ENCODE measurements at regions of chr10 and their contacts with region 1.

Region 1: GRCh38 chr10:102352066-102352715 is 43.3 kb upstream of the NFKB2 start:
- DNase-seq: peak; percentile 85
- ATAC-seq: peak; percentile 88
- H3K4me3 Mint-ChIP-seq: no peak overlapping the region
- H3K27ac Mint-ChIP-seq: no peak overlapping the region
- H3K4me1 Mint-ChIP-seq: no peaks in the 10 kb centered on the region
- H3K27me3 Mint-ChIP-seq: no peaks in the 10 kb centered on the region

Region 2: GRCh38 chr10:101207026-101207425 is 1145.2 kb before region 1 on chr10:
- CTCF ChIA-PET with region 1: no interaction called
- POLR2A ChIA-PET with region 1: no interaction called
- intact Hi-C with region 1: no loop called
- DNase-seq: no peak
- ATAC-seq: no peak
- H3K4me3 Mint-ChIP-seq: no peak overlapping the region
- H3K27ac Mint-ChIP-seq: no peak overlapping the region
- H3K4me1 Mint-ChIP-seq: no peaks in the 10 kb centered on the region
- H3K27me3 Mint-ChIP-seq: peaks cover 30% of the 10 kb centered on the region

Region 3: DNA sequence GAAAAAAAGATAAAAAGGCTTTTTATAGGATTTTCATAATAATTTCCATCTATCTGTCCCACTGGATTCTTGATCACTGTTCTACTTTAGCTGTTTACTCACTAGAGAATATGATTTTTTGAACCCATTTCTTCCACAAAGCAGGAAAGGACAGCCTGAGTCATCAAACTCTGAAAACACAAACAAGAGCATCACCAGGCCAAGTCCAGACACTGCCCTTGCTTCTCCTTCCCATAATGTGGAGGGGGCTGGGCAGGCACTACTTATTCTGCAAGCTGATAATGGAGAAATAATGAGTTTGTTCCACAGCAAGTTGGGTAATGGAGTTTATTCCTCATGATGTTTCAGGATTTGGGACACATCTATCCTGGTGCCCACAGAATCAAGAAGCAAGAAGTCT is 495.6 kb before region 1 on chr10:
- CTCF ChIA-PET with region 1: no interaction called
- POLR2A ChIA-PET with region 1: no interaction called
- intact Hi-C with region 1: no loop called
- DNase-seq: no peak
- ATAC-seq: no peak
- H3K4me3 Mint-ChIP-seq: no peak overlapping the region
- H3K27ac Mint-ChIP-seq: no peak overlapping the region
- H3K4me1 Mint-ChIP-seq: peaks cover 4% of the 10 kb centered on the region
- H3K27me3 Mint-ChIP-seq: no peaks in the 10 kb centered on the region

Region 4: DNA sequence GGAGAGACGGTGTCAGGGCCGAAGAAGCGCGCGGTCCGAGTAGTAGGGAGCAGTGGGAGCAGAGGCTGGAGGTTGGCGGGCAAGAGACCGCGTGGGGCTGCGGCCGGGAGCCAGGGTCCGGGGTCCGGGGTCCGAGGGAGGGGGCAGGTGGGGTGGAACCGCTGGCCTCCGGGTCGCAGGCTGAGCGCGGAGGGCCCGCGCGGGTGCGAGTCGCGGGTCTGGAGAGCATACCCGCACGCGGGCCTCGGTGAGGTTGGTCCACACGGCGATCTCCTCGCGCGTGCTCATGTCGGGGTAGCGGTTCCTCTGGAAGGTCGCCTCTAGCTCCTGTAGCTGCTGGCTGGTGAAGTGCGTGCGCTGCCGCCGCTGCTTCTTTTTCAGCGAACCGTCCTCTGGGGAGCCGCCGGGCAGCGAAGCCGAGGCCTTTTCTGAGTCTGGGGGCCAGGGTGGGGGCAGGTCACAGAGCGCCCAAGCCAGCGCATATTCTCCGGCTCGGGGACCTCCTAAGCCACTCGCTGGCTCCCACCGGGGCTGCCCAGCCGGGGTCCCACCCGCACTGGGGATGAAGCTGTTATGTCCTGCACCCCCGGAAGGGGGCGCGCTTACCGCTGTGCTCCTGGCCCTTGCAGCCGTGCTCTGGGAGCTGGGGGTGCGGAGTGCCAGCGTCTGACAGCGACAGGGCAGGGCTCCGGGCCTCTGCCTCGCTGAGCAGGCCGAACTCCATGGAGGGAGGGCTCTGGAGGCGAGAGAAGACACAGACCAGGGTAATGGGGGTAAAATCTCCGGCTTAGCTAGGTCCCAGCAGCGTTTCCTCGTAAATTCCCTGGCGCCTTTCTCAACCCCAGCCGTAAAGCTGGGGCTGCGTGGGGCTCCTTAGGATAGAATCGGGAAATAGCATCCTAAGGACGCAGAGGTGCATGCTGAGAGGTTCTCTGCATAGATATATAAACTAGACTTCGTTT is 120.6 kb before region 1 on chr10:
- CTCF ChIA-PET with region 1: interaction called, 833 read pairs
- POLR2A ChIA-PET with region 1: interaction called, 23 read pairs
- intact Hi-C with region 1: loop called (anchors 1 kb)
- DNase-seq: peak; percentile 89
- ATAC-seq: peak; percentile 78
- H3K4me3 Mint-ChIP-seq: peak overlapping the region; percentile 63
- H3K27ac Mint-ChIP-seq: no peak overlapping the region
- H3K4me1 Mint-ChIP-seq: peaks cover 17% of the 10 kb centered on the region
- H3K27me3 Mint-ChIP-seq: peaks cover 43% of the 10 kb centered on the region

Region 5: DNA sequence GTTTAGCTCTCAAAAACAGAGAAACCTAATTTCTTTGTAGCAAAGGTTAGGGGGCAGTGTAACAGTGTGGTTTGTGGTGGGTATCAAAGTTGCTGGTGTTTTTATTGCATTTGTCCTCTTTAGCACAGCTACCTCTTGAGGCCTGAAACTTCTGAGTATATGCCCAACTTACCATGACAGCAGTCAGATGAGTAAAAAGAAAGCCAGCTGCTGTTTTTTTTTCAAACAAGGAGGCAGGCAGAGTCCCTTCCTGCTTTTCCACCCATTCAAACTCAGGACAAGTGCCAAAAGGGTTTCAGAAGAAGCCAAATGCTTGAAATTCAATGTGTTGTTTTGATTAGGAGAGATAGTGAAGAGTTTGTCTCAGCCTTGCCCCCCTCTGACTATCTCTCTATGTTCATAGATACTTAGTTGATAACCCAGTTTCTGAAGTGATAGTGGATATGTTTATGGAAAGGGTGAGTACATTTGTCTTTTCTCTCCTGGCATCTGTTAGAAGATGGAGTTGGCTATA is 83.8 kb before region 1 on chr10:
- CTCF ChIA-PET with region 1: interaction called, 20 read pairs
- POLR2A ChIA-PET with region 1: interaction called, 4 read pairs
- intact Hi-C with region 1: no loop called
- DNase-seq: no peak
- ATAC-seq: peak; percentile 61
- H3K4me3 Mint-ChIP-seq: peak overlapping the region; percentile 48
- H3K27ac Mint-ChIP-seq: peak overlapping the region; percentile 94
- H3K4me1 Mint-ChIP-seq: peaks cover 57% of the 10 kb centered on the region
- H3K27me3 Mint-ChIP-seq: no peaks in the 10 kb centered on the region

Region 6: GRCh38 chr10:102310361-102311024 is 41.7 kb before region 1 on chr10:
- CTCF ChIA-PET with region 1: interaction called, 33 read pairs
- POLR2A ChIA-PET with region 1: no interaction called
- intact Hi-C with region 1: no loop called
- DNase-seq: no peak
- ATAC-seq: no peak
- H3K4me3 Mint-ChIP-seq: no peak overlapping the region
- H3K27ac Mint-ChIP-seq: no peak overlapping the region
- H3K4me1 Mint-ChIP-seq: peaks cover 53% of the 10 kb centered on the region
- H3K27me3 Mint-ChIP-seq: no peaks in the 10 kb centered on the region

Region 7: DNA sequence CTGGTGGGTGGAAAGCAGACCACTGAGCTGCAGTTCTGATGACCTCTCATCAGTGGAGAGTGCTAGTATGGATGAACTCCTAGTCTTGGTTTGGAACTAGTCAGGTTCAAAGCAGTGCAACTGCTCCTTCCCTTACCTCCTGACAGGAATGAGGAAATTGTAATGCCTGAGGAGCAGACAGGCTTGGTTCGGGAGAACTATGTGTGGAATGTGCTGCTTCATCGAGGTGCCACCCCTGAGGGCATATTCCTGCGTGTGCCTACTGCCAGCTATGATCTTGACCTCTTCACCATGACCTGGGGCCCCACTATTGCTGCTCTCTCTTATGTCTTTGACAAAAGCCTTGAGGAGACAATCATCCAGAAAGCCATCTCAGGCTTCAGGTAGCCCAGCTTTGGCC is 15.9 kb after region 1 on chr10:
- CTCF ChIA-PET with region 1: interaction called, 56 read pairs
- POLR2A ChIA-PET with region 1: no interaction called
- intact Hi-C with region 1: no loop called
- DNase-seq: no peak
- ATAC-seq: no peak
- H3K4me3 Mint-ChIP-seq: no peak overlapping the region
- H3K27ac Mint-ChIP-seq: no peak overlapping the region
- H3K4me1 Mint-ChIP-seq: no peaks in the 10 kb centered on the region
- H3K27me3 Mint-ChIP-seq: no peaks in the 10 kb centered on the region

Region 8: DNA sequence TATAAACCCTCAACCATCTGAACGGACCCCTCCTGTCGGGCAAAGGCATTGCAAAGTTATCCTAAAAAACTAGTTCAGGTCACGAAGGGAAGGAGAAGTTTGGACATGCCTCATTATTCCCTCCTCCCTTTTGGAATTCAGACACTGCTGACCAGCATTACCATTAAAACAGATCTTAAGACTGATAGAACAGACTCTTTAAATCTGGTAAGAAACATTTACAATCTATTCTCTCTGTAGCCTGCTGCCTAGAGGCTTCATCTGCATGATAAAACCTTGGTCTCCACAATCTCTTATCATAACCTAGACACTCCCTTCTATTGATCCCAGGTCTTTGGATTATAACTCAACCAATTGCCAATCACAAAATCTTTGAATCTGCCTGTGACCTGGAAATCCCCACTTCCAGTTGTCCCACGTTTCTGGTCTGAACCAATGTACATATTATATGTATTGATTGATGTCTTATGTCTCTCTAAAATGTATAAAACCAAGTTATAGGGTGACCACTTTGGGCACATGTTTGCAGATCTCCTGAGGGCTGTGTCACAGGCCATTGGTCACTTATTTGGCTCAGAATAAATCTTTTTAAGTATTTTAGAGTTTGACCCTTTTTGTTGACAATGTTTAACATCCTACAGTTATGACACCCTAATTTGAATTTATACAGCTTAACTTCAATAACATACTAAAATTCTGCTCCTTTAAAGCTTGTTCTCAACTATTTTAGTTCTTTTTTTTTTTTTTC is 542.4 kb after region 1 on chr10:
- CTCF ChIA-PET with region 1: no interaction called
- POLR2A ChIA-PET with region 1: no interaction called
- intact Hi-C with region 1: no loop called
- DNase-seq: no peak
- ATAC-seq: no peak
- H3K4me3 Mint-ChIP-seq: no peak overlapping the region
- H3K27ac Mint-ChIP-seq: no peak overlapping the region
- H3K4me1 Mint-ChIP-seq: no peaks in the 10 kb centered on the region
- H3K27me3 Mint-ChIP-seq: no peaks in the 10 kb centered on the region

Region 9: DNA sequence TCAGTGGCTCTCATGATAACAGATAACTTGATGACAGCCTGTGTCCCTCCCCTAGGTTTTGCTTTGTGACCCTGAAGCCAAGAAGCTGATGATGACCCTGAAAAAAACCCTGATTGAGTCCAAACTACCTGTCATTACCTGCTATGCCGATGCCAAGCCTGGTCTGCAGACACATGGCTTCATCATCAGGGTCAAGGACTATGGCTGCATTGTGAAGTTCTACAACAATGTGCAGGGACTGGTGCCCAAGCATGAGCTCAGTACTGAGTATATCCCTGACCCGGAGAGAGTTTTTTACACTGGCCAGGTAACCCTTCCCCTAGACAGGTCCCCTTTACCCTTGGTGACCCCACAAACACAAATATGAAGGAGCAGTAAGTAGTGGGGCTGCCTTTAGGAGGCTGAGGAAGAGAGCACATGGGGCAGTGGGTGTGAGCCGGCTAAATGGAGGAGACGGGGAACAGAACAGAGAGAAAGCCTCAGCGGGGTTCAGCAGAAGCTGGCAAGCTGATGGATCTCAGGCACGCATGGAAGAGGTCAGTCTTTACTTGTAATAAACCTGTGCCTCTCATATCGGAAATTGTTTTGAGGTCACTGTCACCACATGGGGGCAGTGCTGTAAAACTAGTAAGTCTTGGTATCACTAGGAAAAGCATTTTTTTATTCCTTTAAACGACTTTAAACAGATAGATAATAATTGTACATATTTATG is 1064.4 kb after region 1 on chr10:
- CTCF ChIA-PET with region 1: no interaction called
- POLR2A ChIA-PET with region 1: no interaction called
- intact Hi-C with region 1: no loop called
- DNase-seq: peak; percentile 70
- ATAC-seq: peak; percentile 55
- H3K4me3 Mint-ChIP-seq: no peak overlapping the region
- H3K27ac Mint-ChIP-seq: no peak overlapping the region
- H3K4me1 Mint-ChIP-seq: no peaks in the 10 kb centered on the region
- H3K27me3 Mint-ChIP-seq: no peaks in the 10 kb centered on the region